Common myeloid progenitor, CD34-positive (primary cell): ENCODE measurements at regions of chr3 and their contacts with region 1.

Region 1: GRCh38 chr3:195250473-195251251 is 20.3 kb downstream of the XXYLT1 start:
- DNase-seq: peak; percentile 74 to 85 (median 83)
- H3K4me3 ChIP-seq: peak overlapping the region in 3 of 7 experiments; percentile 16 to 57 (median 20)
- H3K27ac ChIP-seq: no peak overlapping the region
- H3K4me1 ChIP-seq: peaks cover 4 to 35% (median 25%) of the 10 kb centered on the region in 4 experiments
- H3K27me3 ChIP-seq: no peaks in the 10 kb centered on the region

Region 2: DNA sequence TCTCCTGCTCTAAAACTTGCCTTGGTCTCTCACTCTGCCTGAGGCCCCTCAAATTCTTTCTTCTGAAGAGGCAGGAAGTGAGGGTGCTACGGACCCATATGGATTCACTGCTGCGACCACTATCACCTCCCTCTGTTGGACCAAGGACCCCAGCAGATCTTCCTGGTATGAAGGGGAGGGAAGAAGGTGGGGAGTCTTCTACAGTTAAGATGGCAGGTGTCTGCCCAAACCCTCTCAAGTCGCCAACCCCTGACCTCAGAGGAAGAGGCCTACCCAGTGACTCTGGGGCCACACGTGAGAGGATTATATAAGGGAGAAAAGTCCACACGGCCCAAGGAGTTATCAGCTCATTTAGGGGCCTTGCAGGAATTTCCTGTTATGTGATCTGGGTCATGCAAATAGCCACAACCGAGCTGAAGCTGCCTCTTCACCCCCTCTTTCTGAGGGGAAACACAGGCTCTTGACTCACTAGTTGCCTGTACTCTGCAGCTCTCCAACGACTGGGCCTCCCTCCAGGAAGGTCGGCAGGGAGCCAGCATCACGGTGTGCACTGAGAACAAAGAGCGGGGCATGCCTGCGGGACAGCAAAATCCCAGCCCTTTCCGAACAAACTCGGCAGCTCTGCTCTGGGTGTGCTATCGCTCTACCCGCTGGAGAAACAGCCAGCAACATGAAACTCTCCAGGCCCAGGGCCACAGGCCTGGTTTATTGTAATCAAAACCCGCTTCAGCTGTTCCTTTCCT is 95.7 kb before region 1 on chr3:
- CTCF ChIA-PET with region 1: interaction called, 17 read pairs
- POLR2A ChIA-PET with region 1: interaction called, 4 read pairs
- DNase-seq: peak; percentile 85 to 96 (median 89)
- H3K4me3 ChIP-seq: peak overlapping the region in 2 of 7 experiments; percentile 29 to 47
- H3K27ac ChIP-seq: peak overlapping the region; percentile 90 to 92
- H3K4me1 ChIP-seq: peaks cover 24 to 99% (median 93%) of the 10 kb centered on the region in 4 experiments
- H3K27me3 ChIP-seq: no peaks in the 10 kb centered on the region

Region 3: DNA sequence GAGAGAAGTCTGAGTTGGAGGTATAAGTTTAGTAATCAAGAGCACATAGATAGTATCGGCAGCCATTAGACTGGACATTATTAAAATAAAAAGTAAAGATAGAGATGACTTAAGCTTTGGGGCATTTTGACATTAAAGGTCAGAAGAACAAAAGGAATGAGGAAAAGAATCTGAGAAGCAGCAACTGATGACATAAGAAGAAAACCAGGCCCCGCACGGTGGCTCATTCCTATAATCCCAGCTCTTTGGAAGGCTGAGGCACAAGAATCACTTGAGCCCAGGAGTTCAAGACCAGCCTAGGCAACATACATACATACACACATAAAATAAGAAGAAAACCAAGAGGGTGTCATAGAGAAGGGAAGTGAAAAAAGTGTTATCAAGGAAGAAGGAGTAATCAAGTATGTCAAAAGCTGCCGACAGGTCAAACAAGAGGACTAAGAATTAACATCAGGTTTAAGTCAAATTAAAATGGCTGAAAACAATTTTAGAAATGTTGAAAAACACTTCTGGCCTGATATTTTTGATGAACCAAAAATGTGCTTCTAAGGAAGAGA is 153.3 kb after region 1 on chr3:
- CTCF ChIA-PET with region 1: no interaction called
- POLR2A ChIA-PET with region 1: no interaction called
- DNase-seq: no peak
- H3K4me3 ChIP-seq: no peak overlapping the region
- H3K27ac ChIP-seq: no peak overlapping the region
- H3K4me1 ChIP-seq: peaks cover 4 to 7% (median 4%) of the 10 kb centered on the region in 4 experiments
- H3K27me3 ChIP-seq: no peaks in the 10 kb centered on the region